MCF 10A (cell line): ENCODE measurements at regions of chr7 and their contacts with region 1.

Region 1: GRCh38 chr7:130205084-130205947 is at the start of gene TMEM209:
- DNase-seq: peak; percentile 97
- H3K4me3 Mint-ChIP-seq: peak within 1 kb of the TSS; percentile 98
- H3K27ac Mint-ChIP-seq: peak within 1 kb of the TSS; percentile 99
- H3K4me1 Mint-ChIP-seq: peaks cover 12% of the 10 kb centered on the region
- H3K27me3 Mint-ChIP-seq: no peaks in the 10 kb centered on the region
- CTCF ChIP-seq: no peak
- total RNA-seq, gene TMEM209: 38.3 and 45.3 TPM in 2 replicates

Region 2: DNA sequence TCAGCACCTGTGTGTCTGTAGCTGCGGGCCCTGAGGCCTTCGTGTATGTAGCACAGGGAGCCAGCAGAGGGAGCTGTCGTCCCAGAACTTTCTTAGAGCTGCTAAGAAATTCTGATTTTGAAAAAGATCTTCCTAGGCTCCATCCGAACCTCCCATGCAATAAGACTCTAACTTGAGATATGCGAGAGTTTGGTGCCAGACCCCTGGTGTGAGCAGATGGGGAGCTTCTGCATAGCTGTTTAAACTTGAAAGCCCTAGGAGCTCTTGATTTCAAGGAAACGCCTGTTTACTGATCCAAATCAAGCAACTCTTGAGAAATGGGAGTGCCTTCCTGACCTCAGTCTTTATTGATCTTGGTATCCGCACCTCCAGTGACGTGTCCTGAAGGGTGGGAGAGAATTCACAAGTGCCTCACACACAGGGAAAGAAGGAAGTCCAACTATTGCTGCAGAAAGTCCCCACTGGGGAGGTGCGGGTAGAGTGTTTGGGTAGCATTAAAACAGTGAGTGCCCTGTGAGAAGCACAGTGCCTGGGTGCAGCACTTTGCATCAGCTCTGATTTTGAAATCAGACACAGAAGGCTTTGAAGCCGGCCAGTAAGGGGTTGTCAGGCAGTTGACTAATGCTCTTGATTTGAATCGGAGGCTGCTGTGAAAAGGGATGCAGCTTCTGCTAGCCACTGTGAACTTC is 837.5 kb before region 1 on chr7:
- CTCF ChIA-PET with region 1: no interaction called
- POLR2A ChIA-PET with region 1: no interaction called
- intact Hi-C with region 1: no loop called
- DNase-seq: peak; percentile 73
- H3K4me3 Mint-ChIP-seq: no peak overlapping the region
- H3K27ac Mint-ChIP-seq: no peak overlapping the region
- H3K4me1 Mint-ChIP-seq: no peaks in the 10 kb centered on the region
- H3K27me3 Mint-ChIP-seq: no peaks in the 10 kb centered on the region
- CTCF ChIP-seq: peak; percentile 86

Region 3: GRCh38 chr7:129433847-129434674 is 771.3 kb before region 1 on chr7 and contains the start of gene STRIP2:
- CTCF ChIA-PET with region 1: no interaction called
- POLR2A ChIA-PET with region 1: no interaction called
- intact Hi-C with region 1: no loop called
- DNase-seq: peak; percentile 84
- H3K4me3 Mint-ChIP-seq: peak within 1 kb of the TSS; percentile 96
- H3K27ac Mint-ChIP-seq: peak within 1 kb of the TSS; percentile 29
- H3K4me1 Mint-ChIP-seq: peaks cover 20% of the 10 kb centered on the region
- H3K27me3 Mint-ChIP-seq: no peaks in the 10 kb centered on the region
- CTCF ChIP-seq: peak; percentile 8
- total RNA-seq, gene STRIP2: 6.3 and 18.3 TPM in 2 replicates

Region 4: DNA sequence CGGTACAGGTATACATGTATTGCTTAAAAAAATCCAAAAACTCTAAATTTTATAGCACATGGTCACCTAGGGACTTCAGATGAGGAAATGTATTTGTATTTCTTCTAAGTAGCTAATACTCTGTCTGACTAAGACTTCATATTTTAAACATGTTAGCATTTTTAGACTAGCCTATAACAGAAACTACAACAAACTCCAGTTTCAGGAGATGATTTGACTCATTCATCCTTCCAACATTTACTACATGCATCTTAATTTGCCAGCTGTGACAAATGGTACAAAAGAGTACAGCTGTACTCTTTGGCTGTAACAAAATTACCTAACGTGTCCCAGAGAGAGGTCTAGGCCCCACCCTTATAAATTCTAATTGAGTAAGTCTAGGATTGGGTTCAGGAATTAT is 22.3 kb before region 1 on chr7:
- CTCF ChIA-PET with region 1: interaction called, 3 read pairs
- POLR2A ChIA-PET with region 1: interaction called, 13 read pairs
- intact Hi-C with region 1: no loop called
- DNase-seq: no peak
- H3K4me3 Mint-ChIP-seq: no peak overlapping the region
- H3K27ac Mint-ChIP-seq: no peak overlapping the region
- H3K4me1 Mint-ChIP-seq: peaks cover 7% of the 10 kb centered on the region
- H3K27me3 Mint-ChIP-seq: no peaks in the 10 kb centered on the region
- CTCF ChIP-seq: no peak

Region 5: DNA sequence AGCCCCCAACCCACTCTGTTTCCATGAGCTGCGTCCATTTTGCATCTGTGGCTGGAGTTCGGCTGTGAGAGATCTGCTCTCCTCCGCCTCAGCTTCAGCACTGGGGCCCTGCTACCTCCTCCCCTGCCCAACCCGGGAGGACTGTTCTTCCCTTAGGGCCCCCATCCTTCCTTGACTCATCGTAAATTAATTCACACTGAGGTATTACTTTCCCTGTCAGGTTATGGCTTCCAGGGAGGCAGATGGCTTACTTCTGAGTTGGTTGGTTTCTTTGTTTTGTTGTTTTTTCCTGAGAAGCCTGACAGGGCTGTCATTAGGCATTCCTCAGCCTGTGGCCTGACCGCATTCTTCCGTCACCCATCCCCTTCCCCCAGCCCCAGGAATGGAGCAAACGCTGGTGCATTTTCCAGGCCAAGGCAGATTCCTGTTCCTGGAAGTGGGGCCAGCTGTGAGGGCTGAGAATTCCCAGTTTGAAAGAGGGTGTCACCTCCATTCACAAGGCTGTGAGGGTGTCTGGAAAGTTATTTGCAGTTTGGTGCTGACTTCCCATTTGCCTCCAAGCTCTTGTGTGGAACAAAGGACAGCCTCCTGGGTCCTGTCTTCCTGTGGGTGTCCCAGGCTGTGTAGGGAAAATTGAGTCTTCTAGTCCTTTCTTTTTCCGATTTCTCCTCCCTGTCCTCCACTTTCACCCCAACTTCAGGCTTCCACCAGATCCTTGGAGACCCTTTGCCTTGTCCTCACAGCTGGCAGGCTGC is 151.0 kb after region 1 on chr7:
- CTCF ChIA-PET with region 1: no interaction called
- POLR2A ChIA-PET with region 1: interaction called, 10 read pairs
- intact Hi-C with region 1: loop called (anchors 10 kb)
- DNase-seq: peak; percentile 95
- H3K4me3 Mint-ChIP-seq: peak overlapping the region; percentile 50
- H3K27ac Mint-ChIP-seq: peak overlapping the region; percentile 68
- H3K4me1 Mint-ChIP-seq: peaks cover 53% of the 10 kb centered on the region
- H3K27me3 Mint-ChIP-seq: no peaks in the 10 kb centered on the region
- CTCF ChIP-seq: no peak